ENCODE measurements at regions of chr7 and their contacts with region 1.

Region 1: GRCh38 chr7:117212969-117213877 is 109.6 kb downstream of the WNT2 start:
- DNase-seq: peak in 12 of 14 experiments; percentile 3 to 62 (median 14)
- ATAC-seq: peak; percentile 65
- H3K4me3 ChIP-seq: no peak overlapping the region
- H3K4me3 Mint-ChIP-seq: no peak overlapping the region
- H3K27ac ChIP-seq: no peak overlapping the region
- H3K27ac Mint-ChIP-seq: no peak overlapping the region
- H3K4me1 ChIP-seq: no peaks in the 10 kb centered on the region
- H3K4me1 Mint-ChIP-seq: no peaks in the 10 kb centered on the region
- H3K27me3 ChIP-seq: no peaks in the 10 kb centered on the region
- H3K27me3 Mint-ChIP-seq: no peaks in the 10 kb centered on the region
- CTCF ChIP-seq: peak; percentile 83

Region 2: GRCh38 chr7:117143580-117143979 is 69.6 kb before region 1 on chr7:
- CTCF ChIA-PET with region 1: no interaction called
- POLR2A ChIA-PET with region 1: no interaction called
- intact Hi-C with region 1: no loop called
- DNase-seq: no peak
- ATAC-seq: no peak
- H3K4me3 ChIP-seq: no peak overlapping the region
- H3K4me3 Mint-ChIP-seq: no peak overlapping the region
- H3K27ac ChIP-seq: no peak overlapping the region
- H3K27ac Mint-ChIP-seq: no peak overlapping the region
- H3K4me1 ChIP-seq: no peaks in the 10 kb centered on the region
- H3K4me1 Mint-ChIP-seq: no peaks in the 10 kb centered on the region
- H3K27me3 ChIP-seq: no peaks in the 10 kb centered on the region
- H3K27me3 Mint-ChIP-seq: no peaks in the 10 kb centered on the region
- CTCF ChIP-seq: no peak

Region 3: GRCh38 chr7:118153551-118154177 is 940.4 kb after region 1 on chr7:
- CTCF ChIA-PET with region 1: no interaction called
- POLR2A ChIA-PET with region 1: no interaction called
- intact Hi-C with region 1: loop called in 1 of 2 experiments (anchors 10 kb)
- DNase-seq: peak in 4 of 14 experiments; percentile 20 to 59 (median 48)
- ATAC-seq: no peak
- H3K4me3 ChIP-seq: no peak overlapping the region
- H3K4me3 Mint-ChIP-seq: no peak overlapping the region
- H3K27ac ChIP-seq: no peak overlapping the region
- H3K27ac Mint-ChIP-seq: no peak overlapping the region
- H3K4me1 ChIP-seq: no peaks in the 10 kb centered on the region
- H3K4me1 Mint-ChIP-seq: no peaks in the 10 kb centered on the region
- H3K27me3 ChIP-seq: peaks cover 0 to 16% of the 10 kb centered on the region in 2 experiments
- H3K27me3 Mint-ChIP-seq: peaks cover 51% of the 10 kb centered on the region
- CTCF ChIP-seq: peak; percentile 91

Region 4: DNA sequence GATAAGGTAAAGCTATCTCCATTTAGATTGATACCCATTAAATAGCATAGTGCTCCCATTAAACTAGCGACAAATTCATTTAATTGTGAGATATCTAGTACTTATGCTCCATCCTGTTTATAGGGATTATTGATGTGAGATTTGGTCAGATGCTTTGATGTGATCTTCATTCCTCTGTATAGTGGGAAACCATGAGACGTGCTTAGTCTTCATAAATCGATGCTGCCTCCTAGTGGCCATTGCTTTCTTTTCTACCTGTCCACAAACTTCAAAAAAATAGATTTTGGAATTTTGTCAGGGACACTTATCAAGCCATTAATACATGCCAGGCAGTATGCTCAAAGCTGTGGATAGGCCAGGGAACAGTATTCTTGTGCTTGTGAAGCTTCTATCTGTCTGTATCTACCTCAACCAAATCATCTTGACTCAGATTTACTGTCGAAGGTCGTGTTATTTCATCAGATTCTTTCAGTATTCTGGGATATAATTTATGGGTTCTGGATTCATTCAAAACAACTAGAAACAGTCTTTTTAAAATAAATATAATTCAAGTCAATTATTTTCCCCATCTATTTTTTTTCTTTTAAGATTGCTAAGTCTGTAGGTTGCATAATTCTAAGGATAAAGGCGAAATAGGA is 982.7 kb after region 1 on chr7:
- CTCF ChIA-PET with region 1: no interaction called
- POLR2A ChIA-PET with region 1: no interaction called
- intact Hi-C with region 1: loop called (anchors 2 to 5 kb)
- DNase-seq: peak in 10 of 14 experiments; percentile 35 to 77 (median 42)
- ATAC-seq: peak; percentile 77
- H3K4me3 ChIP-seq: no peak overlapping the region
- H3K4me3 Mint-ChIP-seq: no peak overlapping the region
- H3K27ac ChIP-seq: no peak overlapping the region
- H3K27ac Mint-ChIP-seq: peak overlapping the region; percentile 2
- H3K4me1 ChIP-seq: no peaks in the 10 kb centered on the region
- H3K4me1 Mint-ChIP-seq: peaks cover 14% of the 10 kb centered on the region
- H3K27me3 ChIP-seq: no peaks in the 10 kb centered on the region
- H3K27me3 Mint-ChIP-seq: no peaks in the 10 kb centered on the region
- CTCF ChIP-seq: peak; percentile 93